Mammary epithelial cell (primary cell): ENCODE measurements at regions of chr10 and their contacts with region 1.

Region 1: DNA sequence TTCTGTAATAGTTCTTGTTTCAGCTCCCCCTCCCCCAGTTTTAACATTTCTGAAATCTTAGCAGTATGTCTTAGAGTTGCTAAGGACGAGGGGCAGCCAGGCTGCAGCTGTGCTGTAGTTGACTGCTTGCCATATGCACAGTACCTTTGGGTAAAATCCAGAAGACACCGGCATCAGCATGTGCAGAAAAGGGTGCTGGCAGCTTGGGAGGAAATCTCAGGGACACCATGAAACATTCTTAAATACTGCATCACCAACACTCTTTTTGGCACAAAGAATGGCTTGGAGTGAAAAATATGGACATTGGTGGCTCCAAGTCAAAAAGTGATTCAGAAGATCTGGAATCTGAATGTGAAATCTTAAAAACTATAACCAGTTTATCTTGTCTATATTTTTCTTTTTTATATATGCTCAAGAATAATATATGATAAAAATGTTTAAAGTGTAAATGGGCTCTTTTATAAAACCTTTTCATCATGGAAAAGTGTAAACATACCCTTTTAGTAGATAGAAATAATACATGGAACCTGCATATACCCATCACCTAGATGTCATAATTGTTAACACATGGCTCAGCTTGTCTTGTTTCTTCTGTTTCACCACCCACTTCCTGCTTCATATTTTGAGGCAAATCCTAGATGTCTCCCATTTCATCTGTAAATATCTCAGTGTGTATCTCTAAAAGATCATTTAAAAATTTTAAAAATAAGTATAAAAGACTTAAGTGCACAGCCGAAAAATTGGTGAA is 34.4 kb upstream of the ARMS2 start:
- DNase-seq: peak; percentile 11
- H3K4me3 ChIP-seq: no peak overlapping the region
- H3K27ac ChIP-seq: peak overlapping the region; percentile 91
- H3K4me1 ChIP-seq: peaks cover 36% of the 10 kb centered on the region
- H3K27me3 ChIP-seq: no peaks in the 10 kb centered on the region
- CTCF ChIP-seq: no peak

Region 2: GRCh38 chr10:122374237-122374869 is 45.7 kb before region 1 on chr10 and contains the start of gene PLEKHA1:
- CTCF ChIA-PET with region 1: no interaction called
- dilution Hi-C with region 1: no loop called
- in situ Hi-C with region 1: no loop called
- intact Hi-C with region 1: loop called (anchors 1 kb)
- DNase-seq: peak; percentile 97
- H3K4me3 ChIP-seq: peak within 1 kb of the TSS; percentile 81 to 98 (median 97)
- H3K27ac ChIP-seq: peak within 1 kb of the TSS; percentile 90
- H3K4me1 ChIP-seq: peaks cover 16% of the 10 kb centered on the region
- H3K27me3 ChIP-seq: no peaks in the 10 kb centered on the region
- CTCF ChIP-seq: no peak
- total RNA-seq, gene PLEKHA1: 52.4 to 56.5 TPM